CD8-positive, alpha-beta T cell (primary cell): ENCODE measurements at regions of chr5 and their contacts with region 1.

Region 1: DNA sequence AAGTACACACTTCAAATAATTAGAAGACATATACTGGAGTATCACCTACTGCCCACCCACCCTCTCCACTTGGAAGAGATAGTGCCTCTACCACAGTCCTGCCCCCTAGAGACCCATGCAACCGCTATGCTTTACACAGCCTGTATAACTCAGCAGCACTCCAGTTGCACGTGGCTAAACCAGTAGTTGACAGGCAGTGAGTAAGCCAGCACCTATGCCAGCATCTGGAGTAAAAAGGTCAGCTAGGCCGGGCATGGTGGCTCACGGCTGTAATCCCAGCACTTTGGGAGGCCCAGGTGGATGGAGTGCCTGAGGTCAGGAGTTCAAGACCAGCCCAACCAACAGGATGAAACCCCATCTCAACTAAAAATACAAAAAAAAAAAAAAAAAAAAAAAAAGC is 356.4 kb downstream of the NR2F1-AS1 start:
- DNase-seq: no peak
- ATAC-seq: no peak
- H3K4me3 ChIP-seq: no peak overlapping the region
- H3K4me3 Mint-ChIP-seq: no peak overlapping the region
- H3K27ac ChIP-seq: no peak overlapping the region
- H3K27ac Mint-ChIP-seq: no peak overlapping the region
- H3K4me1 ChIP-seq: no peaks in the 10 kb centered on the region
- H3K4me1 Mint-ChIP-seq: no peaks in the 10 kb centered on the region
- H3K27me3 ChIP-seq: no peaks in the 10 kb centered on the region
- H3K27me3 Mint-ChIP-seq: no peaks in the 10 kb centered on the region
- CTCF ChIP-seq: no peak

Region 2: GRCh38 chr5:93208141-93208751 is 16.4 kb before region 1 on chr5:
- CTCF ChIA-PET with region 1: no interaction called
- POLR2A ChIA-PET with region 1: no interaction called
- intact Hi-C with region 1: loop called in 1 of 2 experiments (anchors 1 kb)
- DNase-seq: no peak
- ATAC-seq: no peak
- H3K4me3 ChIP-seq: no peak overlapping the region
- H3K4me3 Mint-ChIP-seq: no peak overlapping the region
- H3K27ac ChIP-seq: no peak overlapping the region
- H3K27ac Mint-ChIP-seq: no peak overlapping the region
- H3K4me1 ChIP-seq: no peaks in the 10 kb centered on the region
- H3K4me1 Mint-ChIP-seq: no peaks in the 10 kb centered on the region
- H3K27me3 ChIP-seq: no peaks in the 10 kb centered on the region
- H3K27me3 Mint-ChIP-seq: no peaks in the 10 kb centered on the region
- CTCF ChIP-seq: no peak